H1 (cell line): ENCODE measurements at regions of chr3 and their contacts with region 1.

Region 1: DNA sequence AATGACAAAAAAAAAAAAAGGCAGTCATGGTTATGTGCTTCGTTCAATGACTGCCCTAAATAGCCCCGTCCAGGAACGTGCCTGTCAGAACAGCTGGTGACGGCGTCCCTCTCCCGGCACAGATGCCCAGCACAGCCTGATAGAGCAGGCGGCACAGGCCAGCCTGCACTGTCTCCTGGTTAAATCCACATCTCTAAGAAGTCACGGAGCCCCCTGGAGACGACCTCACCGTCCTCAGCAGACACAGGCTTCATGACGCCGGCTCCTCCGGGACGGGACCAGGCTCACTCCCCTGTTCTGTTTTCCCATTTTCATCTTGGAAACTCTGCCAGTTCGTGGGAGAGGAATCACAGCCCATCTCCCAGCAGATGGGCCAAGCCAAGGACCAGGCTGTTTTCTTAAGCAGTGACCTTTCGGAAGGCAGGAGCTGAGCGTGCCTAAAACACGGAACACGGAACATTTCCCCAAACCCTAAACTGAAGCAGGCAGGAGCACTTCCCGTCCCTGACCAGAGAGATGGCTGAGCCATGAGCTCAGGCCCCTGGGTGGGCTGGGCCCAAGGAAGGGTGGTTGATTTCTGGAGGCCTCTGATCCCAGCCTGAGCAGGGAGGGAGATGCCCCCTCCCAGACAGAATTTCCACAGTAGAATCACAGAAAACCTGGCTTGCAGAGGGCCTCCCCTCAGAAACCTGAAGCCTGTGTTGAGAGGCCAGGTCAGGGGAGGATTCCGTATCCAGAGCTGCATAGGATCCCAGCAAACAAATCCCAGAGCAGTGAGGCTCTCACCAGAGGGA is 35.9 kb downstream of the ADCY5 start:
- DNase-seq: no peak
- H3K4me3 ChIP-seq: no peak overlapping the region
- H3K27ac ChIP-seq: no peak overlapping the region
- H3K4me1 ChIP-seq: peaks cover 0 to 11% (median 5%) of the 10 kb centered on the region in 4 experiments; a peak in 6 of 7 replicates
- H3K27me3 ChIP-seq: no peaks in the 10 kb centered on the region; a peak in 1 of 7 replicates
- CTCF ChIP-seq: no peak
- EP300 ChIP-seq: no peak
- POLR2A ChIP-seq: no peak
- RAD21 ChIP-seq: no peak

Region 2: DNA sequence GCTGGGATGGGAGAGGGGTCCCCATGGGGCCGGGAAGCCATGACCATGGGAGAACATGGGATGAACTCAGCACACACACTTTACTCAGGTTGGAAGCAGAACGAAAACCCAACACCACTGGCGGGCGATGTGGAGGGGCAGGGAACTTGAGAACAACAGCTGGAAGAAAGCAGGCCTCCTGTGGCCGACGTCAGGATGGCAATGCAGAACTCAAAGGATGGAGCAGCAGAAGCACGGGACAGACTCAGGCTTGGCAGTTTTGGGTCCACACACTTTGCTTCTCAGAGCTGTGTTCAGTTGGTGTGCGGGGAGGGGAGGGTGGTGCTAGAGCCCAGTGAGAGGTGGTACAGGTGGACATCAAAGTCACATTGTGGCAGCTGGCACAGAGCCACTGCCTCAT is 130.5 kb before region 1 on chr3:
- CTCF ChIA-PET with region 1: no interaction called
- POLR2A ChIA-PET with region 1: no interaction called
- DNase-seq: peak in 1 of 2 experiments; percentile 48
- H3K4me3 ChIP-seq: no peak overlapping the region
- H3K27ac ChIP-seq: no peak overlapping the region
- H3K4me1 ChIP-seq: peaks cover 0 to 10% (median 3%) of the 10 kb centered on the region in 4 experiments; a peak in 5 of 7 replicates
- H3K27me3 ChIP-seq: no peaks in the 10 kb centered on the region
- CTCF ChIP-seq: peak in 2 of 3 experiments; percentile 39 to 45; a peak in 3 of 4 replicates
- EP300 ChIP-seq: no peak
- POLR2A ChIP-seq: no peak
- RAD21 ChIP-seq: peak; percentile 22 to 30; a peak in 2 of 4 replicates

Region 3: DNA sequence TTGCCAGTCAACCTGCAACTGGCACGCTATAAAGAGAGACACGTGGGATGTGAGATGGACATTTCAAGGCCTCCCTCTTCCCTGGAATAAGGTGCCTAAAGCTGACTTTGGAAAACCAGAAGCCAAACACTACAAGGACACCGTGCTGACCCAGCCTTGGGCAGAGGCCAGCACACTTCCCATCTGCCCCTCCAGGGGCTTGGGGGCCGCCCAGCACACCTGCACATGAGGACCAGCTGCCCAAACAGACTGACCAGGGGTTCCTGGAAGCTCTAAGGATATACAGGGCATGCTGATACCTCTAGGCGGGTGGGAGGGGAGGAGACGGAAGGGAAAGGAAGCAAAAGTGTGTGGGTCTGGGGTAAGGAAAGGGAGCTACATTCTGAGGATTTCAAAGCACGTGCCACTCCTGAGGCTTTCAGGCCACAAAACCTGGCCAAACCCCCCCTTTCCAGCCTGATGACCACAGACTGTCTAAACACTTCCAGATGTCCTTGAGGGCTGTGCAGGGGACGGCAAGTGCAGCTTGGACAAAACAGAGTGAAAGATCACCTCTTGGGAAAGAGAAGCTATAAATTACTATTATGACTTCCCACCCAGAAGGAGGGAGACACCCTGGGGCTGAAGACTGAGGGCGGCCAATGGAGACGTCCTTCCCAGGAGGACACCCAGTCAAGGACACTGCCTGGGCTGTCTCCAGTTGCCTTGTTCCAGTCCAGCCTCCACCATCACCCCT is 22.0 kb before region 1 on chr3:
- CTCF ChIA-PET with region 1: interaction called, 15 read pairs
- POLR2A ChIA-PET with region 1: no interaction called
- DNase-seq: no peak
- H3K4me3 ChIP-seq: no peak overlapping the region
- H3K27ac ChIP-seq: no peak overlapping the region
- H3K4me1 ChIP-seq: no peaks in the 10 kb centered on the region; a peak in 2 of 7 replicates
- H3K27me3 ChIP-seq: no peaks in the 10 kb centered on the region
- CTCF ChIP-seq: no peak
- EP300 ChIP-seq: no peak
- POLR2A ChIP-seq: no peak
- RAD21 ChIP-seq: no peak

Region 4: GRCh38 chr3:123396163-123397049 is 16.6 kb before region 1 on chr3:
- CTCF ChIA-PET with region 1: interaction called, 15 read pairs
- POLR2A ChIA-PET with region 1: no interaction called
- DNase-seq: no peak
- H3K4me3 ChIP-seq: no peak overlapping the region
- H3K27ac ChIP-seq: no peak overlapping the region
- H3K4me1 ChIP-seq: no peaks in the 10 kb centered on the region; a peak in 1 of 7 replicates
- H3K27me3 ChIP-seq: no peaks in the 10 kb centered on the region
- CTCF ChIP-seq: no peak
- EP300 ChIP-seq: no peak
- POLR2A ChIP-seq: no peak
- RAD21 ChIP-seq: no peak

Region 5: GRCh38 chr3:123401836-123402530 is 11.0 kb before region 1 on chr3:
- CTCF ChIA-PET with region 1: interaction called, 13 read pairs
- POLR2A ChIA-PET with region 1: no interaction called
- DNase-seq: no peak
- H3K4me3 ChIP-seq: no peak overlapping the region
- H3K27ac ChIP-seq: no peak overlapping the region
- H3K4me1 ChIP-seq: peaks cover 0 to 7% (median 3%) of the 10 kb centered on the region in 4 experiments; a peak in 4 of 7 replicates
- H3K27me3 ChIP-seq: no peaks in the 10 kb centered on the region
- CTCF ChIP-seq: no peak
- EP300 ChIP-seq: no peak
- POLR2A ChIP-seq: no peak
- RAD21 ChIP-seq: no peak

Region 6: GRCh38 chr3:123476967-123477750 is 64.2 kb after region 1 on chr3:
- CTCF ChIA-PET with region 1: no interaction called
- POLR2A ChIA-PET with region 1: no interaction called
- DNase-seq: no peak
- H3K4me3 ChIP-seq: no peak overlapping the region
- H3K27ac ChIP-seq: no peak overlapping the region
- H3K4me1 ChIP-seq: no peaks in the 10 kb centered on the region
- H3K27me3 ChIP-seq: no peaks in the 10 kb centered on the region; a peak in 1 of 7 replicates
- CTCF ChIP-seq: no peak
- EP300 ChIP-seq: no peak
- POLR2A ChIP-seq: no peak
- RAD21 ChIP-seq: no peak